ENCODE measurements at regions of chr10 and their contacts with region 1.

Region 1: DNA sequence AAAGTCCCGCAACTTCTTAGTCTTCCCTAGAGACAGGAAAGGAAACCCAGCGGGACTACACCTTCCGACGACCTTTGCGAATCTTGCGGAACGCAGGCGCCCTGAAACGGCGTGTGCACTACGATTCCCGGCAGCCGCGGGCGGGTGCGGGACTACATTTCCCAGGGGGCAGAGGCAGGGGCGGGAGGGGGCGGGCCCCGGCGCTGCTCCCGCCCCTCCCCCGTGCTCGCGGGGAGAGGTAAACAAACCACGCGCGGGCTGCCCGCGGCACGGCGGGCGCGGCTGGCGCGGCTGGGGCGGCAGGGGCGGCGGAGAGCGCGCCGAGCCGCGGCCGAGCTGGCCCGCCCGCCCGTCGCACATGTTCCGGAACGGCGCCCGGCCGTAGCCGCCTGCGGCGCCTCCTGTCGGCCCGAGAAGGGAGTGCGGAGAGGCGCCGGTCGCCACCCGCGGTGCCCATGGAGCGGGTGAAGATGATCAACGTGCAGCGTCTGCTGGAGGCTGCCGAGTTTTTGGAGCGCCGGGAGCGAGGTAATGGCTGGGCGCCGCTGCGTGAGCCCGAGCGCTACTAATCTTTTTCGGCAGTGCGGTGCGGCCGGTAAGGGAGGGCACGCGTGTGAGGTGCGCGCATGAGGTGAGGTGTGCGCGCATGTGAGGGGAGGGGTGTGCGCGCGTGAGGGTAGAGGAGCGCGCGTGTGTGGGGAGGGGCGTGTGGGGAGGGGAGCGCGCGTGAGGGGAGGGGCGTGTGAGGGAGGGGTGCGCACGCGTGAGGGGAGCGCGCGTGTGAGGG is 18.5 kb downstream of the MXI1 start:
- DNase-seq: peak; percentile 93
- ATAC-seq: peak; percentile 81
- H3K4me3 ChIP-seq: peak overlapping the region; percentile 90
- H3K27ac ChIP-seq: peak overlapping the region; percentile 96
- H3K4me1 ChIP-seq: peaks cover 6% of the 10 kb centered on the region
- H3K27me3 ChIP-seq: no peaks in the 10 kb centered on the region
- CTCF ChIP-seq: peak; percentile 72
- POLR2A ChIP-seq: no peak
- RAD21 ChIP-seq: peak; percentile 64

Region 2: GRCh38 chr10:110151467-110151866 is 74.5 kb before region 1 on chr10:
- CTCF ChIA-PET with region 1: no interaction called
- POLR2A ChIA-PET with region 1: no interaction called
- dilution Hi-C with region 1: no loop called
- in situ Hi-C with region 1: no loop called
- intact Hi-C with region 1: no loop called
- DNase-seq: no peak
- ATAC-seq: no peak
- H3K4me3 ChIP-seq: no peak overlapping the region
- H3K27ac ChIP-seq: no peak overlapping the region
- H3K4me1 ChIP-seq: no peaks in the 10 kb centered on the region
- H3K27me3 ChIP-seq: peaks cover 30% of the 10 kb centered on the region
- CTCF ChIP-seq: no peak
- POLR2A ChIP-seq: no peak
- RAD21 ChIP-seq: no peak

Region 3: GRCh38 chr10:110279407-110279986 is 53.5 kb after region 1 on chr10:
- CTCF ChIA-PET with region 1: no interaction called
- POLR2A ChIA-PET with region 1: no interaction called
- dilution Hi-C with region 1: no loop called
- in situ Hi-C with region 1: no loop called
- intact Hi-C with region 1: loop called (anchors 2 kb)
- DNase-seq: peak; percentile 71
- ATAC-seq: peak; percentile 94
- H3K4me3 ChIP-seq: no peak overlapping the region
- H3K27ac ChIP-seq: no peak overlapping the region
- H3K4me1 ChIP-seq: peaks cover 1% of the 10 kb centered on the region; the same call in 1 of the 2 replicates
- H3K27me3 ChIP-seq: no peaks in the 10 kb centered on the region
- CTCF ChIP-seq: peak; percentile 84
- POLR2A ChIP-seq: no peak
- RAD21 ChIP-seq: peak; percentile 92